GM13977 (cell line): ENCODE measurements at regions of chr15 and their contacts with region 1.

Region 1: DNA sequence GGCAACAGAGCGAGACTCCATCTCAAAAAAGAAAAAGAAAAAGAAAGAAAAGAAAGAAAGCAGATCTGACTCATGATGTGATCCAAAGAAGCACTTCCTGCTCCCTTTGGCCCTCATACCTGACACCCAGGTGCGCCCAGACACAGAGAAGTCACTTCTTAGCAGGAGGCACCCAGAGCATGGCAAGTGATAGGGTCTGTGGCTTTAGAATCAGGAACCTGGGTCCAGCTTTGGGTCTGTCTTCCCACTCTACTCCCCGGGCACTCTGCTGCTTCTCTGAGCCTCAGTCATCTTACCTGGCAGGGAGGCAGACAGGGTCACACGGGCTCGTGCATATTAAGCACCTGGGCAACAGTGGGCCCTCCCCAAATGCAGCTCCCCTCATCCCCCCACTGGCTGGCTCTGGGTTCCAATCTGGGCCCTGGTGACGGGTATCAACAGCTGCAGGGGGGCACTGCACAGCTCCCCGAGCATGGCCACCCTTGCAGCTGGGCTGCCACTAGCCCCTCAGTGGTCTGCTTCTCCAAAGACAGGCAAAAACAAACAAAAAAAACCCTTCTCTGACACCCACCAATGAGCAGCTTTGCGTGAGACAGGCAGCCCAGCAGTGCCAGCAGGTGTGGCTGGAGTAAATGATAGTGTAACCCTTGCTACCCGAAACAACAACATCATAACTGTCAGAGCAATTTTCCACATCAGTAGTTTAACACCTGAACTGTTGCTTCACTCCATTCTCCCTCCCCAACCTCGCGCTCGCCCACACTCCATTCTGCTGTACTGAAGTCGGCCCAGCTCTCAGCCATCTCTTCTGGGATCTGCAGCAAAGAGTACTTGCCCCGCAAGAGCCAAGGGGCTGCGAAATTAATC is 99.8 kb downstream of the MEGF11 start:
- DNase-seq: peak; percentile 83
- CTCF ChIP-seq: no peak

Region 2: DNA sequence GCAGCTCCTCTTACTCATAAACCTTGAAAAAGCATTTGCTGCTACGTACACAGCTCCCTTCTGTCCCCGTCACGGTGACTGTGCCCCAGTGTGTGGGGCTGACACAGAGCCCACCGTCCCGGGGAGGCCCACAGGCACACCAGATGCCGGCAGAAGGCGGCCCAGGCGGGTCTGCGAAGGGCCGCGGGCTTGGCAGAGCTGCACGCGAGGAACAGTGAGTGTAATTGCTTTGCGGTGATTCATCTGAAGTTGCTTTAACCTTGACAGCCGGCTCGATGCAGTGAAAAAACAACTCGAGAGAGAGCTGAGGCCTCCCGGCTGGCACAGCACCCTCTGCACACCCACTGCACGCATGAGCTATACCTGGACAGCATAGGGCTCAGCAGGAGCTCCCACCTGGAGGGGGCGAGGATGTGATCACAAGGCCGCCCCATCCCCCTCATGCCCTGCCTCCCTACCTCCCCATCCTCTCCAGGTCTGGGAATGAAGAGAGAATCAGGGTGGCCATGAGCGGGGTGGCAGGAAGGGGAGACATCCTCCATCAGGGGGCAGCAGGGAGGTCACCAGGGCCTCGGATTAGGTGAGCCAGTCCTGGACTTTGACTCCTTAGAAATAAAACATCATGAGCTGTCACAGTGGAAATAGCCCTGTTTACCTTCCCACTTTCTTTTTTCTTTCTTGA is 72.9 kb before region 1 on chr15:
- in situ Hi-C with region 1: no loop called
- DNase-seq: no peak
- CTCF ChIP-seq: peak; percentile 20

Region 3: DNA sequence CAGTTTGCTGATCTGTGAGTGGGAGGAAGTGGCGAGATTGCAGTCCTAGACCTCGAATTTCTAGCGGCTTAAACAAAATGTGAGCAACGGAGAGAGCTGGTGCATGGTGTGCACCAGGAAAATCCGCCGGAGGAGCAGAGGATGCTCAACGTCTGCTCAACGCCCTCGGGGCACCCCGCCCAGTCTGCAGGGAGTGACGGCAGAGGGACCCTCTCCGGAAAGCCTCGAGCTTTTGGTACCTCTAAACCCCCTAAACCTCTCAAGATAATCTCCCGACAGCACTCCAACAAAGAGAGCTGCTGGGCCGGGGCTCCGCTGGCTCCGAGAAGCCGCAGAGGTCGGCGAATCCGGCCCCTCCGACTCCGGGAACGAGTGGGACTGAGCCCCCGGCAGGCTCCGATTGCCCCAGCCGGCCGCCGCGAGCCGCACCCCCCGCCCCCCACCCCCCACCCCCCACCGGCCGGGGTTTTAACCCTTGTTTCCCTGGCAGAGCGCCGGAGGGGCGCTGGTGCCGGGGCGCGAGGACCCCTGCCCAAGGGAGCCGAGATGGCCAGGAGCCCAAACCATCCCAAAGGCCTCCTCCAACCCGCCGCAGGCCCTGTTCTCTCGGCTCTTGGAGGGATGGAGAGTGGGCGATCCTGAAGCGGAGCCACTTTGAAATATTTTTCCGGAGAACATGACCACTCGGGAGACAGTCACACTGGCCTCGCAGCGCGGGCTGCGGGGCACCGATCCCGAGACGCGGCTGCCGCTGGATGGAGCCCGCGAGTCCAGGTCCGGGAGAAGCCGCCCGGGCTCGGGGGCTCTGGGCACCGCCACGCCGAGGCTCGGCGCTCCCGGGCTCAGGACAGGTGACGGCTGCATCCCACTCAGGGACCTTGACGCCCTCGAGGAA is 98.3 kb after region 1 on chr15:
- in situ Hi-C with region 1: loop called (anchors 25 kb)
- DNase-seq: peak; percentile 90
- CTCF ChIP-seq: peak; percentile 77